SK-N-SH (cell line): ENCODE measurements at regions of chr3 and their contacts with region 1.

Region 1: GRCh38 chr3:185942907-185943759 is 5.3 kb upstream of the TRA2B start:
- DNase-seq: peak; percentile 78
- H3K4me3 ChIP-seq: peak overlapping the region in 1 of 2 experiments; percentile 43; a peak in 1 of 4 replicates
- H3K27ac ChIP-seq: no peak overlapping the region
- H3K4me1 ChIP-seq: peaks cover 0 to 3% of the 10 kb centered on the region in 2 experiments; a peak in 1 of 4 replicates
- H3K27me3 ChIP-seq: no peaks in the 10 kb centered on the region
- CTCF ChIP-seq: peak; percentile 99
- EP300 ChIP-seq: no peak
- RAD21 ChIP-seq: peak; percentile 57

Region 2: GRCh38 chr3:185659942-185660921 is 282.9 kb before region 1 on chr3:
- CTCF ChIA-PET with region 1: interaction called, 15 read pairs
- POLR2A ChIA-PET with region 1: no interaction called
- DNase-seq: peak; percentile 78
- H3K4me3 ChIP-seq: peak overlapping the region in 1 of 2 experiments; percentile 18; a peak in 1 of 4 replicates
- H3K27ac ChIP-seq: peak overlapping the region in 1 of 2 experiments; percentile 95; a peak in 2 of 4 replicates
- H3K4me1 ChIP-seq: peaks cover 3 to 52% of the 10 kb centered on the region in 2 experiments; a peak in 3 of 4 replicates
- H3K27me3 ChIP-seq: no peaks in the 10 kb centered on the region
- CTCF ChIP-seq: peak; percentile 99
- EP300 ChIP-seq: no peak
- RAD21 ChIP-seq: peak; percentile 92

Region 3: GRCh38 chr3:185929192-185930151 is 13.7 kb before region 1 on chr3:
- CTCF ChIA-PET with region 1: interaction called, 24 read pairs
- POLR2A ChIA-PET with region 1: interaction called, 17 read pairs
- DNase-seq: no peak
- H3K4me3 ChIP-seq: no peak overlapping the region
- H3K27ac ChIP-seq: peak overlapping the region in 1 of 2 experiments; percentile 18; a peak in 1 of 4 replicates
- H3K4me1 ChIP-seq: peaks cover 54 to 56% of the 10 kb centered on the region in 2 experiments
- H3K27me3 ChIP-seq: no peaks in the 10 kb centered on the region
- CTCF ChIP-seq: no peak
- EP300 ChIP-seq: no peak
- RAD21 ChIP-seq: no peak

Region 4: DNA sequence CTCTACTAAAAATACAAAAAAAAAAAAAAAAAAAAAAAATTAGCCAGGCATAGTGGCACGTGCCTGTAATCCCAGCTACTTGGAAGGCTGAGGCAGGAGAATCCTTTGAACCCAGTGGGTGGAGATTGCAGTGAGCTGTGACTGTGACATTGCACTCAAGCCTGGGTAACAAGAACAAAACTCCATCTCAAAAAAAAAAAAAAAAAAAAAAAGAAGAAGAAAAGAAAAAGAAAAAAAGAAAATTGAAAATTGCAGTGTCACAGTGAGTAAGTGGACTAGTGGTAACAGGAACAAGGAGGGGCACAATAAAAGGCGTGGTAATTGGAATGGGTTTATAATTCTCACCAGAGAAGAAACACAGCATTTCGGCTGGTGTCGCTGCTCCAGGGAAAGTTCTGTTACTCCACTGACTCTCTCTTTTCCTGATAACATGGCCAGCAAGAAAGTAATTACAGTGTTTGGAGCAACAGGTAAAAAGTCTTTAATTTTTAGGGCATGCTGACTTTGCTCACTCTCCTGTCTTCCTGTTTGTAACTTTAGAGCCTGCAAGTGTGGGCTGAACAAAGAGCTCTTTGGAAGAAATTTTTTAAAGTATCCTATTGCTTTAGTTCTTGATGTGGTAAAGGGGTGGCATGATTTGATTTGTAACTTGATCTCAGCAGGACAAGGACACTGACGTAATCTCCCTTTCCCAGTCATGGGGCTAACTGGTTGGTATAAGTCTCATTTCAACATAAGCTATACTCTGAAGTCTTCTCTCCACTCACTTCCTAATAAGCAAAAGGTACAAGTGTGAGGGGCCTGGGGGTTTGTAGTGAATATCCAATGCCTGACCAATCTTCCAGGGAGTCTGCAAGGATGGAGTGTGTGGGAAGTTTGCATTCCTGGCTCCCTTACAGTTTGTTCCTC is 16.7 kb after region 1 on chr3:
- CTCF ChIA-PET with region 1: interaction called, 53 read pairs
- POLR2A ChIA-PET with region 1: no interaction called
- DNase-seq: no peak
- H3K4me3 ChIP-seq: no peak overlapping the region
- H3K27ac ChIP-seq: no peak overlapping the region
- H3K4me1 ChIP-seq: no peaks in the 10 kb centered on the region; a peak in 1 of 4 replicates
- H3K27me3 ChIP-seq: no peaks in the 10 kb centered on the region; the same call in 1 of the 2 replicates
- CTCF ChIP-seq: no peak
- EP300 ChIP-seq: no peak
- RAD21 ChIP-seq: no peak

Region 5: GRCh38 chr3:185976977-185977678 is 34.0 kb after region 1 on chr3:
- CTCF ChIA-PET with region 1: interaction called, 34 read pairs
- POLR2A ChIA-PET with region 1: no interaction called
- DNase-seq: peak; percentile 70
- H3K4me3 ChIP-seq: no peak overlapping the region; a peak in 1 of 4 replicates
- H3K27ac ChIP-seq: no peak overlapping the region
- H3K4me1 ChIP-seq: no peaks in the 10 kb centered on the region
- H3K27me3 ChIP-seq: no peaks in the 10 kb centered on the region
- CTCF ChIP-seq: peak; percentile 96
- EP300 ChIP-seq: no peak
- RAD21 ChIP-seq: peak; percentile 73

Region 6: DNA sequence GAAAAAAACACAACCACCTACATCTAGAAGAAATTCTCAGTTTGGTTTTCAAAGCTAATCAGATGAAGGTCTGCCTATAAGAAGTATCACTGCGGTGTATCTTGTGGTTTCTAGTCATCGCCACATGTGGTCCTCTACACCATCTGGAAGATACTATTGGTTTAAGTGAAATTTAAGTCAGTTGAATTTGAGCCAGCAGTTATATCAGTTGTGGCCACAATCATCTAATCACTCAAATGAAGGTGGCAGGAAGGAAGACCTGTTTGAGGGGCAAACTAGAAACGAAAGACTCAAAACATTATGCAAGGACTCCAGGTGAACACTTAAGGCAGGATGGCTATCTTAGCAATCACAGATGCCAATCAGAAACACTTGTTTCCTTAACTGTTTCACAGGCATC is 117.1 kb after region 1 on chr3:
- CTCF ChIA-PET with region 1: no interaction called
- POLR2A ChIA-PET with region 1: no interaction called
- DNase-seq: no peak
- H3K4me3 ChIP-seq: no peak overlapping the region
- H3K27ac ChIP-seq: no peak overlapping the region
- H3K4me1 ChIP-seq: peaks cover 0 to 1% of the 10 kb centered on the region in 2 experiments; a peak in 1 of 4 replicates
- H3K27me3 ChIP-seq: no peaks in the 10 kb centered on the region
- CTCF ChIP-seq: no peak
- EP300 ChIP-seq: no peak
- RAD21 ChIP-seq: no peak

Region 7: GRCh38 chr3:186259612-186260383 is 316.7 kb after region 1 on chr3:
- CTCF ChIA-PET with region 1: interaction called, 12 read pairs
- POLR2A ChIA-PET with region 1: no interaction called
- DNase-seq: peak; percentile 90
- H3K4me3 ChIP-seq: peak overlapping the region in 1 of 2 experiments; percentile 17; a peak in 1 of 4 replicates
- H3K27ac ChIP-seq: peak overlapping the region in 1 of 2 experiments; percentile 55; a peak in 1 of 4 replicates
- H3K4me1 ChIP-seq: peaks cover 0 to 11% of the 10 kb centered on the region in 2 experiments; a peak in 1 of 4 replicates
- H3K27me3 ChIP-seq: no peaks in the 10 kb centered on the region; the same call in 1 of the 2 replicates
- CTCF ChIP-seq: peak; percentile 80
- EP300 ChIP-seq: no peak
- RAD21 ChIP-seq: peak; percentile 88

Region 8: GRCh38 chr3:186617038-186617946 is 674.2 kb after region 1 on chr3:
- CTCF ChIA-PET with region 1: interaction called, 12 read pairs
- POLR2A ChIA-PET with region 1: no interaction called
- DNase-seq: peak; percentile 84
- H3K4me3 ChIP-seq: peak overlapping the region in 1 of 2 experiments; percentile 34; a peak in 1 of 4 replicates
- H3K27ac ChIP-seq: no peak overlapping the region
- H3K4me1 ChIP-seq: peaks cover 0 to 7% of the 10 kb centered on the region in 2 experiments; a peak in 2 of 4 replicates
- H3K27me3 ChIP-seq: peaks cover 37% of the 10 kb centered on the region; the same call in 1 of the 2 replicates
- CTCF ChIP-seq: peak; percentile 85
- EP300 ChIP-seq: no peak
- RAD21 ChIP-seq: peak; percentile 69